Tibial artery (tissue), 4 donors: ENCODE measurements at regions of chr7 and their contacts with region 1.

Region 1: DNA sequence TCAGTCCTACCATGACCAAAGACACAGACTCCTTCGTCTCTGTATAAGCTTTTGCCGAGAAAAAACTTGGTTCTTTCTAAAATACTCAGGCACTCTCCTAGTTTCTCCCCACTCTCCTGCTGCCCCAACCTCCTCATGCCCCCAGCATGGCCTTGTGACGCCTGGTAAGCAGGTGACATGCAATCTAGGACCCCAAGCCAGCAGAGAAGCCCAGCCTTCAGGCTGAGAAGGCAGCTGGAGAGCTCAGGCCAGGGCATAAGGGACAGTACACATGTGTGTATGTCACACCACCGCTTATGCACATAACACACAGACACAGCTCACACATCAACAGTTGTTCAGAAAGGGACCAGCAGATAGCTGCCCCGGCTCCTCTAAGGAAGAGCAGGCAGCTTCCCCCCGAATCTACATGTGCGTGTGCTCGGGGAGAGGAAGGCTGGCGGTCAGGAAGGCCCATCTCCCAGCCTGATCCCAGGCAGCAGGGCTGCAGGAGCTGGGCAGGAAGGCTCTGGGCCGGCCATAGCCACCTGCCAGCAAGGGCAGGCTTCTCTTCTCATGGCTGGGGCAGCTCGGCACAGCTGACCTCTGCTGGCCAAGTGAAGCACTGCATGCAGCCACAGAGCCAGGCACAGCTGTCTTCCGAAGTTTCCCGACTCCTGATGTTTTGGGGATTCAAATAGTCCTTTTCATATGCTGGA is 8.5 kb downstream of the DDX56 start:
- DNase-seq: peak; percentile 47 to 77
- H3K4me3 ChIP-seq: no peak overlapping the region
- H3K27ac ChIP-seq: peak overlapping the region in 1 of 2 donors; percentile 38
- H3K4me1 ChIP-seq: no peaks in the 10 kb centered on the region
- H3K27me3 ChIP-seq: no peaks in the 10 kb centered on the region
- CTCF ChIP-seq: peak; percentile 87 to 95

Region 2: GRCh38 chr7:44490351-44491200 is 74.7 kb before region 1 on chr7 and contains the start of gene NUDCD3:
- intact Hi-C with region 1: loop called (anchors 10 kb)
- DNase-seq: peak; percentile 80 to 88
- H3K4me3 ChIP-seq: peak within 1 kb of the TSS; percentile 88 to 89
- H3K27ac ChIP-seq: peak within 1 kb of the TSS; percentile 93 to 98
- H3K4me1 ChIP-seq: peaks cover 0 to 42% (median 34%) of the 10 kb centered on the region in 4 donors
- H3K27me3 ChIP-seq: no peaks in the 10 kb centered on the region
- CTCF ChIP-seq: no peak